ENCODE measurements at regions of chr1 and their contacts with region 1.

Region 1: DNA sequence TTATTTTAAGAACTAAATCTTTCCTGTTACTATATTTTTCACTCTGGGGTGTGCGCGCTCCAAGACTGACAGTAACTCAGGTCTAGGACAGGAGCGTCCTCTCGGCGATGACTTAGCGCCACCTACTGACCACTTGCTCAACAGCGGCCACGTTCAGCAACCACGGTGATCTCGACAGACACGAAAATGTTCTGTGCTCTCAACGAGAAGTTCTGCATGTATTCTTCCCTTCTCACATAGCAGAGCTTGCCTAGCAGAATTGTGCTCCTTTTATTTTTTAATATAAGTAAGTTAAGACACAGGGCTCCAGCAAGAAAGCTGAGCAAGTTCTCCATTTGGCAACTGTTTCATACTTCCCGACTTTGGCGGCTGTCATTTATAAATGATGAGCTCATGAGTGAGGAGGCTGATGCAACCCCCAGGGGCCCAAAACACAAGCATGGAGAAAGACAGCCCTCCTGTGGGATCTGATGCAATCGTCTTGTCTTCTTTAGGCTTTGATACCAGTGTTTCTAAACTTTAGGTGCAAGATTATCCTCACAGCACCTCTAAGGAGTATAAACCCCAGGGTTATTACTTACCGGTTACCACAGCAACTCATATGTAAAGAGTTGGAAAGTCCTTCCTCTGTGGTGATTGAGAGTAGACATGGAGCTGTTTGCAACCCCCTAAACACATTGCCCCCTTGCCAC is 92.6 kb downstream of the HHIPL2 start:
- DNase-seq: peak; percentile 58 to 88 (median 82)
- ATAC-seq: peak; percentile 97
- H3K4me3 ChIP-seq: no peak overlapping the region
- H3K4me3 Mint-ChIP-seq: peak overlapping the region in 9 of 10 donors; percentile 0 to 75 (median 58)
- H3K27ac ChIP-seq: no peak overlapping the region
- H3K27ac Mint-ChIP-seq: peak overlapping the region; percentile 26 to 84 (median 65)
- H3K4me1 ChIP-seq: peaks cover 8 to 9% of the 10 kb centered on the region in 2 donors
- H3K4me1 Mint-ChIP-seq: peaks cover 8 to 31% (median 15%) of the 10 kb centered on the region in 7 donors
- H3K27me3 ChIP-seq: no peaks in the 10 kb centered on the region
- H3K27me3 Mint-ChIP-seq: peaks cover 0 to 4% (median 0%) of the 10 kb centered on the region in 5 donors

Region 2: DNA sequence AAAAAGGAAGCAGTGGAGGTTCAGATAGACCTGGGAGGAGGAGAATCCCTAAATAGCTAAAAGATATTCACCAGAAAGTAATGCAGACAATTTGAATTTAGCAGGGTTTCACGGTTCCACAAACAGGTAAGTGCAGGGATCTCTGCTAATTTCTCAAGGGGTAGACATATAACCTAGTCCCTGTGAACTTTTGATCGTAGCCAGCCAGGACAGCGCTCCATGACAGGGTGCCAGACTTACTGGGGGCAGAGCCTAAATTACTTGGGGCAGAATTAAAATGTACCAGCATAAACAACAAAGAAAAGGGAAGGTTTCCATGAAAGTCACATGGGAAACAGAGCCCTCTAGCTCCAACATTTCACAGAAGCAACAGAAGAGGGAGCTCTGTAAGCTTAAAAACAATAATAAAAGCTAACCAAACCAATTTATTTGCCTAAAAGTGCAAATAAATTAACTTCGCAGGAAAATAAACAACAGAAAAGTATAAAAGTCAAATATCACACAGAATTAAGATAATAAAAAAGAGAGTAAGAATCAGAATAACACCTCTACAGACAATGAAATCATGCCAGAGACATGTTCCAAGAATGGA is 911.7 kb before region 1 on chr1:
- CTCF ChIA-PET with region 1: no interaction called
- POLR2A ChIA-PET with region 1: no interaction called
- intact Hi-C with region 1: loop called (anchors 1 to 10 kb)
- DNase-seq: peak in 1 of 9 donors; percentile 4
- ATAC-seq: no peak
- H3K4me3 ChIP-seq: no peak overlapping the region
- H3K4me3 Mint-ChIP-seq: no peak overlapping the region
- H3K27ac ChIP-seq: no peak overlapping the region
- H3K27ac Mint-ChIP-seq: peak overlapping the region in 1 of 9 donors; percentile 21
- H3K4me1 ChIP-seq: no peaks in the 10 kb centered on the region
- H3K4me1 Mint-ChIP-seq: peaks cover 0 to 3% (median 0%) of the 10 kb centered on the region in 7 donors
- H3K27me3 ChIP-seq: no peaks in the 10 kb centered on the region
- H3K27me3 Mint-ChIP-seq: peaks cover 5 to 27% (median 13%) of the 10 kb centered on the region in 5 donors

Region 3: GRCh38 chr1:221886743-221887413 is 568.5 kb before region 1 on chr1:
- CTCF ChIA-PET with region 1: no interaction called
- POLR2A ChIA-PET with region 1: no interaction called
- intact Hi-C with region 1: loop called in 1 of 2 experiments (anchors 5 kb)
- DNase-seq: no peak
- ATAC-seq: no peak
- H3K4me3 ChIP-seq: no peak overlapping the region
- H3K4me3 Mint-ChIP-seq: no peak overlapping the region
- H3K27ac ChIP-seq: no peak overlapping the region
- H3K27ac Mint-ChIP-seq: no peak overlapping the region
- H3K4me1 ChIP-seq: no peaks in the 10 kb centered on the region
- H3K4me1 Mint-ChIP-seq: peaks cover 0 to 5% (median 0%) of the 10 kb centered on the region in 7 donors
- H3K27me3 ChIP-seq: no peaks in the 10 kb centered on the region
- H3K27me3 Mint-ChIP-seq: peaks cover 0 to 27% (median 12%) of the 10 kb centered on the region in 5 donors

Region 4: GRCh38 chr1:222124602-222125001 is 330.7 kb before region 1 on chr1:
- CTCF ChIA-PET with region 1: interaction called, 8 read pairs
- POLR2A ChIA-PET with region 1: no interaction called
- intact Hi-C with region 1: loop called (anchors 1 kb)
- DNase-seq: no peak
- ATAC-seq: no peak
- H3K4me3 ChIP-seq: no peak overlapping the region
- H3K4me3 Mint-ChIP-seq: no peak overlapping the region
- H3K27ac ChIP-seq: no peak overlapping the region
- H3K27ac Mint-ChIP-seq: no peak overlapping the region
- H3K4me1 ChIP-seq: no peaks in the 10 kb centered on the region
- H3K4me1 Mint-ChIP-seq: peaks cover 0 to 2% (median 0%) of the 10 kb centered on the region in 7 donors
- H3K27me3 ChIP-seq: no peaks in the 10 kb centered on the region
- H3K27me3 Mint-ChIP-seq: peaks cover 0 to 5% (median 4%) of the 10 kb centered on the region in 5 donors

Region 5: GRCh38 chr1:222329493-222330045 is 125.8 kb before region 1 on chr1:
- CTCF ChIA-PET with region 1: interaction called, 3 read pairs
- POLR2A ChIA-PET with region 1: interaction called, 3 read pairs
- intact Hi-C with region 1: loop called in 1 of 2 experiments (anchors 10 kb)
- DNase-seq: no peak
- ATAC-seq: no peak
- H3K4me3 ChIP-seq: no peak overlapping the region
- H3K4me3 Mint-ChIP-seq: no peak overlapping the region
- H3K27ac ChIP-seq: no peak overlapping the region
- H3K27ac Mint-ChIP-seq: no peak overlapping the region
- H3K4me1 ChIP-seq: no peaks in the 10 kb centered on the region
- H3K4me1 Mint-ChIP-seq: peaks cover 0 to 25% (median 15%) of the 10 kb centered on the region in 7 donors
- H3K27me3 ChIP-seq: no peaks in the 10 kb centered on the region
- H3K27me3 Mint-ChIP-seq: peaks cover 0 to 2% (median 0%) of the 10 kb centered on the region in 5 donors

Measured in naive thymus-derived CD4-positive, alpha-beta T cell (primary cell).